H1 (cell line): ENCODE measurements at regions of chr12 and their contacts with region 1.

Region 1: GRCh38 chr12:54359033-54359761 is 5.1 kb downstream of the GPR84 start:
- DNase-seq: peak; percentile 89 to 98
- H3K4me3 ChIP-seq: peak overlapping the region; percentile 57 to 78 (median 74)
- H3K27ac ChIP-seq: peak overlapping the region; percentile 35; the same call in 1 of the 2 replicates
- H3K4me1 ChIP-seq: peaks cover 16 to 38% (median 20%) of the 10 kb centered on the region in 4 experiments
- H3K27me3 ChIP-seq: no peaks in the 10 kb centered on the region; a peak in 1 of 7 replicates
- CTCF ChIP-seq: no peak
- EP300 ChIP-seq: no peak; a peak in 1 of 3 replicates
- POLR2A ChIP-seq: 0 out of 3 replicates have a peak, but pooled peaks of 1 of the 2 experiments have one; percentile 8
- RAD21 ChIP-seq: no peak

Region 2: GRCh38 chr12:54220092-54220557 is 139.1 kb before region 1 on chr12:
- CTCF ChIA-PET with region 1: interaction called, 21 read pairs
- POLR2A ChIA-PET with region 1: interaction called, 8 read pairs
- DNase-seq: peak in 1 of 2 experiments; percentile 94
- H3K4me3 ChIP-seq: no peak overlapping the region
- H3K27ac ChIP-seq: no peak overlapping the region
- H3K4me1 ChIP-seq: peaks cover 0 to 20% (median 15%) of the 10 kb centered on the region in 4 experiments; a peak in 6 of 7 replicates
- H3K27me3 ChIP-seq: peaks cover 1 to 36% (median 25%) of the 10 kb centered on the region in 4 experiments; a peak in 6 of 7 replicates
- CTCF ChIP-seq: peak; percentile 73 to 90 (median 84)
- EP300 ChIP-seq: no peak
- POLR2A ChIP-seq: no peak
- RAD21 ChIP-seq: peak; percentile 78 to 84

Region 3: GRCh38 chr12:54251667-54252284 is 107.4 kb before region 1 on chr12:
- CTCF ChIA-PET with region 1: interaction called, 28 read pairs
- POLR2A ChIA-PET with region 1: interaction called, 3 read pairs
- DNase-seq: no peak
- H3K4me3 ChIP-seq: no peak overlapping the region
- H3K27ac ChIP-seq: no peak overlapping the region
- H3K4me1 ChIP-seq: no peaks in the 10 kb centered on the region
- H3K27me3 ChIP-seq: no peaks in the 10 kb centered on the region
- CTCF ChIP-seq: peak in 2 of 3 experiments; percentile 41 to 55; a peak in 2 of 4 replicates
- EP300 ChIP-seq: no peak
- POLR2A ChIP-seq: no peak
- RAD21 ChIP-seq: peak; percentile 56 to 62

Region 4: DNA sequence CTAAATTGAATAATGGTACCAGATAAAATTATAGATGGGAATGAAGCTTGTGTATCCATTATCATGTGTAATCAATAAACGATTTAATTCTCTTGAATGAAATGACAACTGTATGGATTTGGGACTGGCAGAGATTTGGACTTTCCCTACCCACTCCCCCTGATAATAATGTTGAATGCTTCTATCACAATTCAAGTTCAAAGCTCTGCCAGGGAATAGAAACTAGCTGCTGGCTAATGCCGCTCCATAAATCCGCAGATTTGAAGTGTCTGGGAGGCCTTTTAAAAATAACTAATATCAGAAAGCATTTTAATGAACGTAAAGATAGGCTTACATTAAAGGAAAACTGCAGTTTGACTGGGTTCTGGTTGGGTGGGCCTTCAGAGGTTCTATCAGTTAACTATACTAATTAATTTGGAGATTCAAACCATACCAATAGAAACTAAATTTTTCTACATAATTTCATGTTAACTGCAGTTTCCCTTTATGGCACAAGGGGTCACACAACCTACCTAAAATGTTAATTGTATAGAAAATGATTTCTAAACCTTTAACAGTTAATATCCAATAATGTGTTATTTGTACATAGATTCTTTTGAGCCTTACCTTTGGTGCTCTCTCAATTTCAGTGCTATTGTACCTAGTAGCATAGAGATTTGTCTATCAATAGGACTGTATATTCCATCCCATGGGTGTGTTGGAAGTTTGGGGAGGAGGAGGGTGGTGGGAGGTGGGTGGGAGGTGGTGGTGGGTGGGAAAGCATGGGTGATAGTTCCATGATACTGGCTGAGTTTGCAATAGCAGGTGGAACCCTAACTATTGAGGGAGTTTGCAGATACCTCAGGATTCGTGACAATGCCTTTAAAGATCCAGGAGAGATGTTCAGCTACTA is 73.8 kb before region 1 on chr12:
- CTCF ChIA-PET with region 1: interaction called, 251 read pairs
- POLR2A ChIA-PET with region 1: interaction called, 133 read pairs
- DNase-seq: no peak
- H3K4me3 ChIP-seq: peak overlapping the region in 1 of 4 experiments; percentile 33; a peak in 2 of 8 replicates
- H3K27ac ChIP-seq: no peak overlapping the region
- H3K4me1 ChIP-seq: peaks cover 0 to 7% (median 3%) of the 10 kb centered on the region in 4 experiments; a peak in 5 of 7 replicates
- H3K27me3 ChIP-seq: no peaks in the 10 kb centered on the region
- CTCF ChIP-seq: no peak
- EP300 ChIP-seq: no peak
- POLR2A ChIP-seq: no peak; a peak in 1 of 3 replicates
- RAD21 ChIP-seq: no peak

Region 5: GRCh38 chr12:54300732-54301427 is 58.3 kb before region 1 on chr12 and contains the start of gene NFE2:
- CTCF ChIA-PET with region 1: interaction called, 251 read pairs
- POLR2A ChIA-PET with region 1: interaction called, 12 read pairs
- DNase-seq: peak; percentile 75 to 85
- H3K4me3 ChIP-seq: peak within 1 kb of the TSS; percentile 24 to 63 (median 46)
- H3K27ac ChIP-seq: peak within 1 kb of the TSS; percentile 75
- H3K4me1 ChIP-seq: peaks cover 12 to 32% (median 21%) of the 10 kb centered on the region in 4 experiments
- H3K27me3 ChIP-seq: peaks cover 0 to 7% (median 0%) of the 10 kb centered on the region in 4 experiments; a peak in 1 of 7 replicates
- CTCF ChIP-seq: peak in 2 of 3 experiments; percentile 21 to 35; a peak in 2 of 4 replicates
- EP300 ChIP-seq: no peak
- POLR2A ChIP-seq: peak in 1 of 2 experiments; percentile 67; a peak in 2 of 3 replicates
- RAD21 ChIP-seq: peak; percentile 8 to 17; a peak in 1 of 4 replicates
- total RNA-seq, gene NFE2: 1.4 and 2.0 TPM in 2 replicates

Region 6: DNA sequence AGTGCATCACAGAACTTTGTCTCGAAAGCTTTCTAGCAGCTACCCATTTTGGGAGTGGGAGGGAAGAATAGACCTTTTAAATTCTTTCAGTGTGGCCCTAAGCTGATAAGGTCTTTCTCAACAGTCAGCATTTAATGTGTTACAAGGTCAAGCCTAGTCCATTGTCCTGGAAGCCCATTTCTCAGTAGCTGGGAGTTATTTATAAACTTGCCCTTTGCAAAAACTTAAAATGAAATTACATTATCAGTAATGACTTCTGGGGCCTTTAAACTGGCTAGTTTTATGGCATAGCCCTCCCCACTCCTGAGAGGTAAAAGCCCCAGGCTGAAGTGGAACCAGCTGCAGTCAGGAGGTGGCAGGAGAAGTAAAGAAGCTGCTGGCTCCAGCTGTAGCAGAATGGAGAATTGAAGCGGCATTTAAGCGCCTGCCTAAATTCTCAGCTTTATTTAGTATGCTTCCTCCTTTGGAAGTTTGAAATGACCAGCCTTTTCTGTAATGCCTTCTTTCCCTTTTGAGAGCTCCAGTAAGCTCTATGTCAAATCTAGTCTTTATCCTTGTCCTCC is 21.8 kb before region 1 on chr12:
- CTCF ChIA-PET with region 1: interaction called, 348 read pairs
- POLR2A ChIA-PET with region 1: interaction called, 109 read pairs
- DNase-seq: no peak
- H3K4me3 ChIP-seq: no peak overlapping the region
- H3K27ac ChIP-seq: no peak overlapping the region
- H3K4me1 ChIP-seq: no peaks in the 10 kb centered on the region
- H3K27me3 ChIP-seq: no peaks in the 10 kb centered on the region
- CTCF ChIP-seq: no peak
- EP300 ChIP-seq: no peak
- POLR2A ChIP-seq: no peak
- RAD21 ChIP-seq: peak in 1 of 2 experiments; percentile 26; a peak in 1 of 4 replicates

Region 7: GRCh38 chr12:54472494-54473262 is 113.5 kb after region 1 on chr12:
- CTCF ChIA-PET with region 1: no interaction called
- POLR2A ChIA-PET with region 1: no interaction called
- DNase-seq: no peak
- H3K4me3 ChIP-seq: no peak overlapping the region
- H3K27ac ChIP-seq: no peak overlapping the region
- H3K4me1 ChIP-seq: peaks cover 0 to 2% (median 0%) of the 10 kb centered on the region in 4 experiments; a peak in 1 of 7 replicates
- H3K27me3 ChIP-seq: no peaks in the 10 kb centered on the region; a peak in 1 of 7 replicates
- CTCF ChIP-seq: no peak
- EP300 ChIP-seq: no peak
- POLR2A ChIP-seq: no peak
- RAD21 ChIP-seq: no peak